CD4-positive, alpha-beta T cell (primary cell): ENCODE measurements at regions of chr19 and their contacts with region 1.

Region 1: DNA sequence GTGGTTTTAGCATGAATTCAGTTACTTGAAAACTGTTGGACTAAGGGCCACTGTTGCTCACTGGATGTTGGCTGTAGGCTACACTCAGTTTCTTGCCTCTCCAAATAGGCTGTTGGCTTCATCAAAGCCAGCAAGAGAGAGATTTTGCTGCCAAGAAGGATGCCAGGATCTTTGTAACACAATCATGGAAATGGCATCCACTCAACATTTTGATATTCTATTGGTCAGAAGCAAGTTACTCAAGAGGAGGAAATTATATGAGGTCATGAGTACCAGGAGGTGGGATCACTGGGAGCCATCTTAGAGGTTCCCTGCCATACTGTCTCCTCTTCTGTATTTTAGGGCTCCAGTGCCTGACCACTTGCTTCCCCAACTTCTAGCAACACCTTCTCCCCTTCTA is 30.6 kb downstream of the SYDE1 start:
- DNase-seq: no peak
- ATAC-seq: no peak
- H3K4me3 ChIP-seq: no peak overlapping the region
- H3K4me3 Mint-ChIP-seq: no peak overlapping the region
- H3K27ac ChIP-seq: no peak overlapping the region
- H3K27ac Mint-ChIP-seq: no peak overlapping the region
- H3K4me1 ChIP-seq: no peaks in the 10 kb centered on the region
- H3K4me1 Mint-ChIP-seq: no peaks in the 10 kb centered on the region
- H3K27me3 ChIP-seq: no peaks in the 10 kb centered on the region
- H3K27me3 Mint-ChIP-seq: no peaks in the 10 kb centered on the region
- CTCF ChIP-seq: no peak

Region 2: DNA sequence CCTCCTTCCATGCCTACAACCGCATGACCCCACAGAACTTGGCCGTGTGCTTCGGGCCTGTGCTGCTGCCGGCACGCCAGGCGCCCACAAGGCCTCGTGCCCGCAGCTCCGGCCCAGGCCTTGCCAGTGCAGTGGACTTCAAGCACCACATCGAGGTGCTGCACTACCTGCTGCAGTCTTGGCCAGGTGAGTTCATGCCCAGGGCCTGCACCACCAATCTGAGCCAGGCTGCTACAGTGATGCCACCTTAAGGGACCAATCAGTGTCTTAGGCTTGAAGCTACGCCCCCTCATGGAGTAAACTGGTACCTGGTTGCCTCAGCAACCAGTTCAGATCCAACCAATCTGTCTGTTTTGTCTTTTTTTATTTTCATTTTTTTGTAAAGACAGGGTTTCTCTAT is 25.4 kb before region 1 on chr19:
- CTCF ChIA-PET with region 1: no interaction called
- POLR2A ChIA-PET with region 1: no interaction called
- intact Hi-C with region 1: loop called in 1 of 2 experiments (anchors 2 kb)
- DNase-seq: peak in 1 of 14 experiments; percentile 43
- ATAC-seq: peak; percentile 24
- H3K4me3 ChIP-seq: no peak overlapping the region
- H3K4me3 Mint-ChIP-seq: no peak overlapping the region
- H3K27ac ChIP-seq: no peak overlapping the region
- H3K27ac Mint-ChIP-seq: no peak overlapping the region
- H3K4me1 ChIP-seq: peaks cover 12% of the 10 kb centered on the region
- H3K4me1 Mint-ChIP-seq: peaks cover 6% of the 10 kb centered on the region
- H3K27me3 ChIP-seq: peaks cover 7 to 10% of the 10 kb centered on the region in 2 experiments
- H3K27me3 Mint-ChIP-seq: peaks cover 6% of the 10 kb centered on the region
- CTCF ChIP-seq: no peak